Left lung (tissue), 14 donors: ENCODE measurements at regions of chr6 and their contacts with region 1.

Region 1: DNA sequence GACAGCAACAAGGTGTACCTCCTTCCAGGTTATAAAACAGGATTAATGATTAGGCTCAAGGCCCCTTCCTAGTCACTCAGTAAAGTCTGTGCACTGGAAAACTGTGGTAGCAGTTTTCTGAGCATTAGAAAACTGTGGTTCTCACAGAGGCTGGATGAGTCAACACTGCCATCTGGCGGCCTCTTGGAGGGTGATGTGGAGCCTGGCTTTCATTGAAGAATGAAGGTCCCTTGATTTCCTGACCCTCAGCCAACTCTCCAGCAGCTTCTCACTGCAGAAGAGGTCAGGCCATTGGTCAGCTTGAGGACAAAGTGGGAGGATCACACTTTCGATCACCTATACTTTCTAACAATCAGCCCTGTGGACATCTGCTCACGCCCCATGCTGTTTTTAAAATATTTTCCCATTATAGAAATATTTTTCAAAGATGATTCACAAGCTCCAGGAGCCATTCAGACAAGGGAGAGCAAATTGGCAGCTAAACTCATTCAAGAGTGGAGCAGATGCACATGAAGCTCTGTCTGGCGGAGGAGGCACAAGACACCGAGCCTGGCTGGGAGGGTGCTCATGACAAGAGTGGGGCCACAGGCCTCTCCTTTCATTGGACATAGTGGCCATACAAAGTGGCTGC is 23.2 kb downstream of the PSMB1 start:
- DNase-seq: peak; percentile 58 to 83 (median 73)
- ATAC-seq: peak; percentile 97
- H3K4me3 ChIP-seq: no peak overlapping the region
- H3K27ac ChIP-seq: no peak overlapping the region
- H3K4me1 ChIP-seq: no peaks in the 10 kb centered on the region
- H3K27me3 ChIP-seq: no peaks in the 10 kb centered on the region
- CTCF ChIP-seq: peak; percentile 79 to 83

Region 2: DNA sequence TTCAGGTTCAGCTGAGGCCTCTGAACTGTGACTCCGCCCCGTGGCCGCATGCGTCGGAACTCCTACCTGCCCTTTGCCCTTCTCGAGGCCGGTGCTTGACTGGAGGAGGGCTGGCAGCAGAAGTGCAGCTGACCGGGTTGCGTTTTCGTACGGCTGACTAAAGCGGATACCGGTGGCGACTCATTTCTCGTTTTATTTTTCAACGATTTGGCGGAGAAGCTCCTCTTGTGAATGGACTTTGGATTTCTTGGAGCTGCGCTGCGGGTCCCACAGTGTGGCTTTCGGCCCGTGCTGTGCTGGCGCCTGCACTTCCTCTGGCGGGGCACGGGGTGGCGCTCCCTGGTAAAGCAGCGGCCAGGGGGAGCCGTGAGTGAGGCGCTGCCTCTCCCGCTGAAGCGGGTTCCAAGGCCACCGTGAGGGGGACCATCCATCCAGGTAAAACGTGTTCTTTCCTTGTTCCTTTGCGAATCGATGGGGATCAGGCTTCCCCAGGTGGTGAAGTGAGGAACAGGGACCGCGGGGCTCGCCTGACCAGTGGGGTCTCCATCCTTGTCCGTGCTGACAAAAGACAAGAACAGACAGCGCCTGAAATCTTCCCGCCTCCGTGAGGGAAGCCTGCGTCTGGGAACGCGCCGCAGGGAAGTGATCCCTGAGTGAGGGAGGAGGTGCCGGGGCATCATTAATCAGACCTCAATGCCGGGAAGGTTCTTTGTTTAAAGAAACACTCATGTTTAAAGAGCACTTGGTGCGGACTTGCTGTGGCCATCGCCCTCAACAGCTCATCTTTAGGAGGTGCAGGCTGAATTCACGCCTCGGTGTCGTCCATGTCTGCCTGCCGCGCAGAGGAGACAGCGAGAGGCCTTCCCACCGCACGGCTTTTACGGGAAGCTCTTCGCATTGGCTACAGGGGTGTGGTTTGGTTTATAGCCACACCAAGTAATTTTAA is 739.7 kb before region 1 on chr6:
- intact Hi-C with region 1: loop called in 1 of 2 experiments (anchors 10 kb)
- DNase-seq: peak; percentile 68 to 93 (median 71)
- ATAC-seq: peak; percentile 99
- H3K4me3 ChIP-seq: peak overlapping the region; percentile 26 to 44
- H3K27ac ChIP-seq: peak overlapping the region; percentile 55 to 61
- H3K4me1 ChIP-seq: peaks cover 3 to 17% of the 10 kb centered on the region in 2 donors
- H3K27me3 ChIP-seq: peaks cover 0 to 23% of the 10 kb centered on the region in 2 donors
- CTCF ChIP-seq: peak; percentile 92 to 95

Region 3: GRCh38 chr6:170423030-170423429 is 106.9 kb before region 1 on chr6:
- intact Hi-C with region 1: no loop called
- DNase-seq: peak in 1 of 4 donors; percentile 68
- ATAC-seq: no peak
- H3K4me3 ChIP-seq: no peak overlapping the region
- H3K27ac ChIP-seq: no peak overlapping the region
- H3K4me1 ChIP-seq: no peaks in the 10 kb centered on the region
- H3K27me3 ChIP-seq: peaks cover 0 to 25% of the 10 kb centered on the region in 2 donors
- CTCF ChIP-seq: no peak